Sigmoid colon (tissue), 7 donors: ENCODE measurements at regions of chr13 and their contacts with region 1.

Region 1: GRCh38 chr13:44373601-44374348 is at the start of gene SERP2:
- DNase-seq: peak; percentile 76
- H3K4me3 ChIP-seq: peak within 1 kb of the TSS; percentile 41 to 74 (median 58)
- H3K27ac ChIP-seq: peak within 1 kb of the TSS; percentile 48 to 75 (median 64)
- H3K4me1 ChIP-seq: peaks cover 0 to 23% (median 14%) of the 10 kb centered on the region in 4 donors
- H3K27me3 ChIP-seq: no peaks in the 10 kb centered on the region
- CTCF ChIP-seq: no peak
- EP300 ChIP-seq: no peak
- POLR2A ChIP-seq: no peak
- total RNA-seq, gene SERP2: 6.9 to 9.6 (median 8.6) TPM

Region 2: DNA sequence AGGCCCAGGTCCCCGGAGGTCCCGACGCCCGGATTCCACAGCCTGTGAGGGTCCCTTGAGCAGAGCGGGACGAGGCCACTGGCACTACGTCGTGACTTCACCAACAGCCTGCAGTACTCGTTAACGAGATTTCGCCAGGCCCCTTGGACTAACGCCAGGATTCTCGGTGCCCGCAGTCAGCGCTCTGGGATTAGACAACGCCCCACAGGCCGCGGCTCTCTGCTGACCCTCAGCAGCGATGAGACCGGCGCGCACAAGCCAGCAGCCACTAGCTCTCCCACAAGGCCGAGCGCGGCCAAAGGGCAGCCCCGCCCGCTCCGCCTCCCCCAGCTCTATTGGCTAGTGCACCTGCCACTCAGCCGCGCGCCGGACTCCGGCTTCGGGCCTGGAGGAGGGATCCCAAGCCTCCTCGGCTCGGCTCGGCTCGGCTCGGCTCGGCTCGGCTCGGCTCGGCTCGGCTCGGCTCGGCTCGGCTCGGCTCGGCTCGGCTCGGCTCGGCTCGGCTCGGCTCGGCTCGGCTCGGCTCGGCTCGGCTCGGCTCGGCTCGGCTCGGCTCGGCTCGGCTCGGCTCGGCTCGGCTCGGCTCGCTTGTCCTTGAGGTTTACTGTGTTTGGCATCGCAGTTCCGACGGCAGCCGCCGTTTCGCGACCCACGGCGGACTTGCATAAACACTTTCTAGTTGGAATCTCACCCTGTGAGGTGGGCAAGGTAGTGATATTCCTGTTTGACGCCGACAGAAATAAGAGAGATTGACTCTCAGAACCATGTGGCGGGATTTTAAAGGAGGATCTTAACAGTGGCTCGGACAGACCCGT is 231.8 kb before region 1 on chr13:
- intact Hi-C with region 1: loop called (anchors 10 kb)
- DNase-seq: peak; percentile 99
- H3K4me3 ChIP-seq: peak overlapping the region; percentile 43 to 57 (median 52)
- H3K27ac ChIP-seq: peak overlapping the region; percentile 86 to 95 (median 90)
- H3K4me1 ChIP-seq: peaks cover 0 to 17% (median 10%) of the 10 kb centered on the region in 4 donors
- H3K27me3 ChIP-seq: no peaks in the 10 kb centered on the region
- CTCF ChIP-seq: peak in 1 of 4 experiments; percentile 32
- EP300 ChIP-seq: no peak
- POLR2A ChIP-seq: peak; percentile 91 to 93